HEK293 (cell line): ENCODE measurements at regions of chr1 and their contacts with region 1.

Region 1: DNA sequence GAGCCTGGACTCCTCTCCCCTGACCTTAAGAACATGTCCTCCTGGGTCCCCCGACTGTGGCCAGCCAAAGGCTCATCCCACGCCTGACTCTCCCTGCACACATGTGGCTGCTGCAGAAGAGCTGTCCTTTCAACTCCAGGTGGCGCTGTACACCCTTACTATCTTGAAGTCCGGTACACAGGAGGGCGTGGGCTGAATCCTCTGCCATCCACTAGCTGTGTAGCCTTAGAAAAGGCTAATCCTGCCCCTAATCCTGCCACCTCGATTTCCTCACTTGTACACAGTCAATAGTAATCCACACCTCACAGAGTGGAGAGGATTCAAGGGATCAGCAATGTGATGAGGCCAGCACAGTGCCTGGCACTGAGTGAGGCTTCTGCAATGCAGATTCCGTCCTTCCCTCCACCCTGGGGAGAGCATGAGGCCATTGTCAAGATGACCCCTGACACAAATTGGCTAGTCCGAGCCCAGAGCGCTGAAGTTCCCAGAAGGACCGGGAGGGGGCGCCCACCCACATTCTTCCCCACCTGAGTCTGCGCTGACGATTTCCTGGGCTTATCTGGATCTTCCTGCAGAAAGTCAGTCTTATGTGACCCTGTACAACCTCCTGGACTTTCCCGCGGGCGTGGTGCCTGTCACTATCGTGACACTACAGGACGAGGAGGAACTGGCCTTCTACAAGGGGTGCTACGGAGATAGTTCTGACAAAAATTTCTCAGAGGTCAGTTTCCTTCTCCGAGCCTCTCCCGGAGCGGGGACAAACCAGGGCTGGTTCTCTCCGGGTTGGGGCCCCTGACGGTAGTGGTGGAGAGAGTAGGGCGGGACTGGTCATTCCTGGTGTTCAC is 47.1 kb upstream of the DMBX1 start:
- H3K4me3 ChIP-seq: peak overlapping the region; percentile 45
- H3K27ac ChIP-seq: no peak overlapping the region; the same call in 1 of the 2 replicates
- H3K4me1 ChIP-seq: no peaks in the 10 kb centered on the region
- CTCF ChIP-seq: peak; percentile 91

Region 2: GRCh38 chr1:46166521-46167462 is 275.7 kb before region 1 on chr1:
- CTCF ChIA-PET with region 1: no interaction called
- POLR2A ChIA-PET with region 1: no interaction called
- H3K4me3 ChIP-seq: no peak overlapping the region
- H3K27ac ChIP-seq: no peak overlapping the region
- H3K4me1 ChIP-seq: no peaks in the 10 kb centered on the region
- CTCF ChIP-seq: no peak

Region 3: DNA sequence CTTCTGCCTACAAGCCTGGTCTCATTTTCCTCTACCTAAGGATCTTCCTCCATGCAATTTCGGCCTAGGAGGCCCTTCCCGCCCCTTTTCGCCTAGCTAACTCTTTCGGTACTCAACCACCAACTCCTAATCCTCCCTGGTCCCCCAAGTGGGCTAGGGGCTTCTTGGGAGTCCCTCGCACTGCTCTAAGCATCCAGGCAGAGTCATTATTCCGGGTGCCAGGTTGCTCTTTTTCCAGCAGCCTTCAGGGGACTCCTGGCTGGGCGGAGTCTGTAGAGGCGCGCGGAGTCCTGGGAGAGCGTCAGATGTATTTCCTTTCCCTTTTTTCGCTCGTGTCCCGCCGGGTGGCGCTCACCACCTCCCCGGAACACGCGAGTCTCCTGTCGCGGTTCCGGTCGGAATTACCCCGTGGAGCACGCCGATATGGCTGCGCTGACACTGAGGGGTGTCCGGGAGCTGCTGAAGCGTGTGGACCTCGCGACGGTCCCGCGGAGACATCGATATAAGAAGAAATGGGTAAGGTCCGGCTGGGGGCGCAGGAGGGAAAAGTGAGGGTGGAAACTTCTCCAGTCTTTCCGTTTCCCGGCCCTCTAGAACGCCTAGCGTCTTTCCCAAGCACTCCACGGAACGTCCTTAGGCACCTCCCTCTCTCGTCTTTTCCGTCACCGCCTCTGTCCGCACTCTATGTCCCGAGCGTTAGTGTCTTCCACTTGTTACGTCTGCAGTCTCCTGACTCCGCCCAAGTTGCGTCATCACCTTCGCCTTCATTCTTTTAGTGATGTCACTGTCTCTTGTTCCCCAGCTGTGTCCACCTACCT is 101.9 kb before region 1 on chr1 and contains the start of gene NSUN4:
- CTCF ChIA-PET with region 1: no interaction called
- POLR2A ChIA-PET with region 1: no interaction called
- H3K4me3 ChIP-seq: peak within 1 kb of the TSS; percentile 78
- H3K27ac ChIP-seq: peak within 1 kb of the TSS; percentile 81
- H3K4me1 ChIP-seq: no peaks in the 10 kb centered on the region; the same call in none of the 2 replicates
- CTCF ChIP-seq: peak; percentile 99

Region 4: DNA sequence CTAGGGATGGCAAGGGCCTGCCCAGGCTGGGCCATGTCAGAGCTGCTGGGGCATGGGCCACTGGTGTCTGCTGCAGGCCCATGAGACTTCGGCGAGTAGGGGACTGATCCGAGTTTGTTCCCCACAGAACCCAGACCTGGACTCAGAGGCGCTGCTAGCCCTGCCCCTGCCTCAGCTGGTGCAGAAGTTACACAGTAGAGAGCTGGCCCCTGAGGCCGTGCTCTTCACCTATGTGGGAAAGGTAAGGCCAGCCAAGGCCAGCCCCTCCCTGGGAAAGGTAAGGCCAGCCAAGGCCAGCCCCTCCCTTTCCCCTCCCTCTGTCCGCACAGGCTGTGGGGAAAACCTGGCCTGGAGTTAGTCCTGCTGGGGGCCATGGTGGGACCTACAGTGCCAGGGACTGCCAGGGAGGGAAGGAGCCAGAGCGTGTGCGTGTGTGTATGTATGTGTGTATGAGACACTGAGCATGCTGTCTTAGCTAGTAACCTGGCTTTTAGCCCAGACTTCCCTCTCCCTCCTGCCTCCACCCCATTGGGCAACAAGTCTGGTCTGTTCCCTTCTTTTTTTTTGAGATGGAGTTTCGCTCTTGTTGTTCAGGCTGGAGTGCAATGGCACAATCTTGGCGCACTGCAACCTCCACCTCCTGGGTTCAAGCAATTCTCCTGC is 40.4 kb before region 1 on chr1:
- CTCF ChIA-PET with region 1: interaction called, 15 read pairs
- POLR2A ChIA-PET with region 1: interaction called, 3 read pairs
- H3K4me3 ChIP-seq: no peak overlapping the region
- H3K27ac ChIP-seq: no peak overlapping the region
- H3K4me1 ChIP-seq: no peaks in the 10 kb centered on the region
- CTCF ChIP-seq: no peak

Region 5: GRCh38 chr1:46431691-46432090 is 10.8 kb before region 1 on chr1:
- CTCF ChIA-PET with region 1: interaction called, 24 read pairs
- POLR2A ChIA-PET with region 1: no interaction called
- H3K4me3 ChIP-seq: no peak overlapping the region
- H3K27ac ChIP-seq: no peak overlapping the region
- H3K4me1 ChIP-seq: no peaks in the 10 kb centered on the region
- CTCF ChIP-seq: no peak

Region 6: GRCh38 chr1:46487818-46488218 is 45.3 kb after region 1 on chr1:
- CTCF ChIA-PET with region 1: interaction called, 14 read pairs
- POLR2A ChIA-PET with region 1: no interaction called
- H3K4me3 ChIP-seq: no peak overlapping the region
- H3K27ac ChIP-seq: no peak overlapping the region
- H3K4me1 ChIP-seq: no peaks in the 10 kb centered on the region
- CTCF ChIP-seq: 0 out of 2 replicates have a peak, but pooled peaks have one; percentile 40

Region 7: DNA sequence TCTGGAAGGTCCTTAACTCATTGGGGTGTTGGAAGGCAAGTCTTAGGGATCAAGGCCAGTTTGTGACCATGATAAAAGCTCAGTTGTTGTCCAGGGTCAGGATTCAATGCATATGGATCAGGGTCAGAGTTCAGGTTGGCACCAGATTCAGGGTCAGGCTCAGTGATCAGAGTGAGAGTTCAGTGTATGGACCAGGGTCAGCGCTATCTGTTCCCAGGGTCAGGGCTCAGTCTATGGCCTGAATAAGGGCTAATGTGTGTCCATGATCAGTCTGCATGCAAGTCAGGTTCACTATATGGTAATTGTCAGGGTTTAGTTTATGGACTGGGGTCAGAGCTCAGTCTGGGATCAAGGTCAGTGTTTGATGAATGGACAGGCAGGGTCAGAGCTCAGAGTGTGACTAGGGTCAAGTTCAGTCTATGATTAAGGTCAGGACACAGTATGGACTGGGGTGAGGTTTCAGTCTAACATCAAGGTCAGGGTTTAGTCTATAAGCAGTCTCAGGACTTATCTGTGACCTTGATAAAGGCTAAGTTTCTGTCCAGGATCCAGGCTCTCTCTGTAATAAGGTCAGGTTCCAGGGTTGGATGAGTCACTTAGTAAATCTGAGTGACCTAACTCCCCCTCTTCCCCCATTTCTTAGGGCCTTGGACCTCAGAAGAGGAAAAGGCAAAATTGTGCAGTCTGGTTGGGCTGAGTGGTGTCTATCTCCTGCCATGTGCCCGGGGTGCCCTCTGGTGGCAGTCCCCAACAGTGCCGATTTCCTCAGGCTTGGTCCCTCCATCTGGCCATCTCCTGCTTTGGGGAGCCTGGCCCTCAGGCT is 85.1 kb after region 1 on chr1:
- CTCF ChIA-PET with region 1: interaction called, 315 read pairs
- POLR2A ChIA-PET with region 1: no interaction called
- H3K4me3 ChIP-seq: no peak overlapping the region
- H3K27ac ChIP-seq: no peak overlapping the region
- H3K4me1 ChIP-seq: peaks cover under 1% of the 10 kb centered on the region; the same call in 1 of the 2 replicates
- CTCF ChIP-seq: peak; percentile 85

Region 8: GRCh38 chr1:46547481-46548383 is 105.2 kb after region 1 on chr1:
- CTCF ChIA-PET with region 1: interaction called, 15 read pairs
- POLR2A ChIA-PET with region 1: no interaction called
- H3K4me3 ChIP-seq: no peak overlapping the region
- H3K27ac ChIP-seq: no peak overlapping the region
- H3K4me1 ChIP-seq: no peaks in the 10 kb centered on the region
- CTCF ChIP-seq: peak; percentile 33; the same call in 1 of the 2 replicates